Naive thymus-derived CD4-positive, alpha-beta T cell (primary cell): ENCODE measurements at regions of chr19 and their contacts with region 1.

Region 1: DNA sequence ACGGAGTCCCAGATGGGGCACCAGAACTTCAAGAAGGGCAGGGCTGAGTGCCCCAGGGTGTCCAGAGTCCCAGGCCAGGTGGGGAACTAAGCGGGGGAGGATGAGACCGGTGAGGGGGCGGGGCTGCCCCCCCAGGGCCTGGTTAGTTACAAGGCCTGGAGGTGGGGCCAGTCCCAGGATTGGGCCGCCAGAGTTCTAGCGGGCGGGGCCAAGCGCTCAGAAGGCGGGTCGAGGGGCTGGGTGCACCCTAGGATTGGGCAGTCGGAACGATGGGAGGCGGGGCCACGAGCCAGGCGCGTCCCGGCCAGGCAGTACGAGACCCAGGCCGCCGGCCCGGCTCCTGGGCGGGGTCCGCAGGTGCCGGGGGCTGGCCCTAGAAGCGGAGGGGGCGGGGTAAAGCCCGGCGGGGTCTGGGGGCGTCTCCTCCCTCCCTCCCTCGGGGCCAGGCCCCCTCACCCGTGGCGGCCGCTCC is 571 bp downstream of the ZNF653 start:
- DNase-seq: peak; percentile 92 to 97 (median 94)
- ATAC-seq: peak; percentile 96
- H3K4me3 ChIP-seq: peak overlapping the region; percentile 69
- H3K4me3 Mint-ChIP-seq: peak overlapping the region; percentile 83 to 97 (median 88)
- H3K27ac ChIP-seq: peak overlapping the region; percentile 98
- H3K27ac Mint-ChIP-seq: peak overlapping the region; percentile 83 to 94 (median 87)
- H3K4me1 ChIP-seq: peaks cover 8 to 12% of the 10 kb centered on the region in 2 donors
- H3K4me1 Mint-ChIP-seq: peaks cover 11 to 19% (median 15%) of the 10 kb centered on the region in 7 donors
- H3K27me3 ChIP-seq: no peaks in the 10 kb centered on the region
- H3K27me3 Mint-ChIP-seq: peaks cover 0 to 3% (median 0%) of the 10 kb centered on the region in 5 donors

Region 2: GRCh38 chr19:10653715-10654492 is 851.2 kb before region 1 on chr19 and contains the start of gene ILF3:
- CTCF ChIA-PET with region 1: no interaction called
- POLR2A ChIA-PET with region 1: no interaction called
- intact Hi-C with region 1: loop called in 1 of 2 experiments (anchors 5 kb)
- DNase-seq: peak; percentile 97 to 100 (median 100)
- ATAC-seq: peak; percentile 89
- H3K4me3 ChIP-seq: peak within 1 kb of the TSS; percentile 87
- H3K4me3 Mint-ChIP-seq: peak within 1 kb of the TSS; percentile 93 to 98 (median 95)
- H3K27ac ChIP-seq: peak within 1 kb of the TSS; percentile 100
- H3K27ac Mint-ChIP-seq: peak within 1 kb of the TSS; percentile 94 to 99 (median 98)
- H3K4me1 ChIP-seq: peaks cover 32 to 38% of the 10 kb centered on the region in 2 donors
- H3K4me1 Mint-ChIP-seq: peaks cover 17 to 61% (median 42%) of the 10 kb centered on the region in 7 donors
- H3K27me3 ChIP-seq: no peaks in the 10 kb centered on the region
- H3K27me3 Mint-ChIP-seq: peaks cover 0 to 3% (median 0%) of the 10 kb centered on the region in 5 donors
- total RNA-seq, gene ILF3: 346 to 515 (median 368) TPM

Region 3: GRCh38 chr19:11374433-11375142 is 130.5 kb before region 1 on chr19 and contains the start of gene SWSAP1:
- CTCF ChIA-PET with region 1: no interaction called
- POLR2A ChIA-PET with region 1: no interaction called
- intact Hi-C with region 1: loop called (anchors 1 kb)
- DNase-seq: peak; percentile 87 to 99 (median 99)
- ATAC-seq: peak; percentile 94
- H3K4me3 ChIP-seq: peak within 1 kb of the TSS; percentile 92
- H3K4me3 Mint-ChIP-seq: peak within 1 kb of the TSS in 3 of 10 donors; percentile 31 to 56 (median 45)
- H3K27ac ChIP-seq: peak within 1 kb of the TSS; percentile 92
- H3K27ac Mint-ChIP-seq: peak within 1 kb of the TSS in 1 of 9 donors; percentile 22
- H3K4me1 ChIP-seq: peaks cover 21 to 30% of the 10 kb centered on the region in 2 donors
- H3K4me1 Mint-ChIP-seq: peaks cover 12 to 40% (median 28%) of the 10 kb centered on the region in 7 donors
- H3K27me3 ChIP-seq: no peaks in the 10 kb centered on the region
- H3K27me3 Mint-ChIP-seq: no peaks in the 10 kb centered on the region
- total RNA-seq, gene SWSAP1: 3.4 to 4.2 (median 4.0) TPM

Region 4: GRCh38 chr19:11482384-11483050 is 22.6 kb before region 1 on chr19:
- CTCF ChIA-PET with region 1: no interaction called
- POLR2A ChIA-PET with region 1: no interaction called
- intact Hi-C with region 1: loop called (anchors 1 kb)
- DNase-seq: peak; percentile 63 to 92 (median 76)
- ATAC-seq: peak; percentile 92
- H3K4me3 ChIP-seq: peak overlapping the region; percentile 19
- H3K4me3 Mint-ChIP-seq: peak overlapping the region in 9 of 10 donors; percentile 52 to 83 (median 71)
- H3K27ac ChIP-seq: no peak overlapping the region
- H3K27ac Mint-ChIP-seq: peak overlapping the region in 2 of 9 donors; percentile 21 to 85
- H3K4me1 ChIP-seq: peaks cover 15 to 20% of the 10 kb centered on the region in 2 donors
- H3K4me1 Mint-ChIP-seq: peaks cover 12 to 24% (median 21%) of the 10 kb centered on the region in 7 donors
- H3K27me3 ChIP-seq: peaks cover 8 to 17% of the 10 kb centered on the region in 2 donors
- H3K27me3 Mint-ChIP-seq: peaks cover 25 to 37% (median 33%) of the 10 kb centered on the region in 5 donors

Region 5: DNA sequence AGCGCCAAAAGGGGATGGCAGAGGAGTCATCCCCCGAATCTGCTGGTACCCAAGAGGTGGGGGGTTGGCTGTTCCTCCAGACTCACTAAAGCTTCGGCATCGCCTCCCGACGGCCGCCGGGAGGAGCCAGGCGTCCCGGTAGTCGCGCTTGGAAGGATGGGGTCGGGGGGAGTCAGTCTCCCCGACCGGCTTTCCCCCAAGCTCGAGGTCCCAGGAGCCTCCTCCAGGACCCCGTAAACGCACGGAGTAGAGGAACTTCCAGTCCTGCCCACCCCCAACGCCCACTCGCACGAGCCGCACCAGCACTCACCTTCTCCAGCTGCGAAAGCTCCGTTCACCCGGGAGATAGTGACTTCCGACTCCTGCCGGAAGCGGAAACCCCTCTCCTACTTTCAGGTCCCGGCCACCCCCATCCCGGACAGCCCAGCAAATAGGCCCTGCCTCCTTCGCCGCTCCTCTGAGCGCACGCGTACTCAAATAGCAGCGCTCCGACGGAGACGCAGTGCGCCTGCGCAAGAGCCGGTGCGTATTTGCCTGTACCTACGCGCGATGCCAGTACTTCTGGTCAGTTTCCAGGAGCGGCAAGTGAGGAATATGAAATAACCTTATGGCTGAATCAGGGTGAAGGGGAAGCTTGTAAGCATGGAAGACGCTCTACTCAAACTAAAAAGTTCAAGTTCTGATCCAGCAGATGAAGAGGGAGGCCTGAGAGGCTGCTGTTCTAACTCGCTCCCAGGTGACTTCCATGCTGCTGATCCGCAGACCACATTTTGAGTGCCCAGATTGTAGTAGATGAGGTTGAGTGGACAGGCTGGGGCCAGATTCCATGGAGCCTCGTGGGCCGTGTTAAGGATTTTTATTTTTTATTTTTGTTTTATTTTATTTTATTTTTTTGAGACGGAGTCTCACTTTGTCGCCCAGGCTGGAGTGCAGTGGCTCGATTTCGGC is 54.1 kb after region 1 on chr19 and contains the start of gene ELOF1:
- CTCF ChIA-PET with region 1: no interaction called
- POLR2A ChIA-PET with region 1: no interaction called
- intact Hi-C with region 1: loop called (anchors 1 to 2 kb)
- DNase-seq: peak; percentile 90 to 97 (median 94)
- ATAC-seq: peak; percentile 97
- H3K4me3 ChIP-seq: peak within 1 kb of the TSS; percentile 94
- H3K4me3 Mint-ChIP-seq: peak within 1 kb of the TSS; percentile 89 to 99 (median 96)
- H3K27ac ChIP-seq: peak within 1 kb of the TSS; percentile 82
- H3K27ac Mint-ChIP-seq: peak within 1 kb of the TSS; percentile 84 to 98 (median 95)
- H3K4me1 ChIP-seq: peaks cover 16 to 19% of the 10 kb centered on the region in 2 donors
- H3K4me1 Mint-ChIP-seq: peaks cover 34 to 58% (median 45%) of the 10 kb centered on the region in 7 donors
- H3K27me3 ChIP-seq: no peaks in the 10 kb centered on the region
- H3K27me3 Mint-ChIP-seq: no peaks in the 10 kb centered on the region
- total RNA-seq, gene ELOF1: 34.0 to 59.8 (median 41.9) TPM

Region 6: GRCh38 chr19:11597202-11598102 is 92.4 kb after region 1 on chr19 and contains the start of gene ZNF627:
- CTCF ChIA-PET with region 1: no interaction called
- POLR2A ChIA-PET with region 1: no interaction called
- intact Hi-C with region 1: loop called (anchors 1 kb)
- DNase-seq: peak; percentile 87 to 98 (median 96)
- ATAC-seq: peak; percentile 100
- H3K4me3 ChIP-seq: peak within 1 kb of the TSS; percentile 85
- H3K4me3 Mint-ChIP-seq: peak within 1 kb of the TSS; percentile 87 to 96 (median 92)
- H3K27ac ChIP-seq: peak within 1 kb of the TSS; percentile 88
- H3K27ac Mint-ChIP-seq: peak within 1 kb of the TSS; percentile 68 to 95 (median 91)
- H3K4me1 ChIP-seq: peaks cover 3 to 14% of the 10 kb centered on the region in 2 donors
- H3K4me1 Mint-ChIP-seq: peaks cover 18 to 43% (median 27%) of the 10 kb centered on the region in 7 donors
- H3K27me3 ChIP-seq: no peaks in the 10 kb centered on the region
- H3K27me3 Mint-ChIP-seq: no peaks in the 10 kb centered on the region
- total RNA-seq, gene ZNF627: 5.2 to 15.4 (median 12.3) TPM

Region 7: DNA sequence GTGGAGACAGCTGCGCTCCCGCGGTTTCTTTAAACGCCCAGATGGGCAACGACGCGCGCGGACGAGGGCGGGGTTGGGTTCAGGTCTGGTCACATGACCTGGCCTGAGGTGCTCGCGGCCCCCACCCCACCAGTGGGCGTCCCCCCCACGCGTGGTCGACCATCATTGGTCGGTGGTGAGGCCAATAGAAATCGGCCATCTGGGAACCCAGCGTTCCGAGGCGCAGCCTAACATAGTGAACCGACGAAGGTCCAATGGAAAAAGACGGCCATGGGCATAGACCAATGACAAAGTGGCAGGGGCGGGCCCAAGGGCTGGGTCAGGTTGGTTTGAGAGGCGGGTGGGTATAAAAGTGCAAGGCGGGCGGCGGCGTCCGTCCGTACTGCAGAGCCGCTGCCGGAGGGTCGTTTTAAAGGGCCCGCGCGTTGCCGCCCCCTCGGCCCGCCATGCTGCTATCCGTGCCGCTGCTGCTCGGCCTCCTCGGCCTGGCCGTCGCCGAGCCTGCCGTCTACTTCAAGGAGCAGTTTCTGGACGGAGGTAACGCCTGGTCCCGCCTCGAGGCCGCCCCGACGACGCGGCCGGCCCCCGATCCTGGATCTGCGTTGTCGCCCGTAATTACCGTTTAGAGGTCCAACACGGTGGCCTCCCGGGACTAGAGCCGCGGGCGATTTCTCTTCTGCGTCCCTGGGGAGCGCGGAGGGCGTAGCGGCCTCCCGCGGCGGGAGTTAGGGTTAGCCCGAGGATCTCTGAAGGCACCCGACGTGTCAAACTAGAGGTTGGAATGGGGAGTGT is 1433.4 kb after region 1 on chr19 and contains the start of gene CALR:
- CTCF ChIA-PET with region 1: no interaction called
- POLR2A ChIA-PET with region 1: no interaction called
- intact Hi-C with region 1: loop called in 1 of 2 experiments (anchors 10 kb)
- DNase-seq: peak; percentile 93 to 100 (median 99)
- ATAC-seq: peak; percentile 94
- H3K4me3 ChIP-seq: peak within 1 kb of the TSS; percentile 90
- H3K4me3 Mint-ChIP-seq: peak within 1 kb of the TSS; percentile 90 to 99 (median 98)
- H3K27ac ChIP-seq: peak within 1 kb of the TSS; percentile 94
- H3K27ac Mint-ChIP-seq: peak within 1 kb of the TSS; percentile 93 to 98 (median 96)
- H3K4me1 ChIP-seq: peaks cover 37 to 41% of the 10 kb centered on the region in 2 donors
- H3K4me1 Mint-ChIP-seq: peaks cover 36 to 76% (median 57%) of the 10 kb centered on the region in 7 donors
- H3K27me3 ChIP-seq: no peaks in the 10 kb centered on the region
- H3K27me3 Mint-ChIP-seq: no peaks in the 10 kb centered on the region
- total RNA-seq, gene CALR: 449 to 1,130 (median 502) TPM